H1 (cell line): ENCODE measurements at regions of chr9 and their contacts with region 1.

Region 1: GRCh38 chr9:127916665-127917613 is at the start of gene ST6GALNAC4:
- DNase-seq: peak in 1 of 2 experiments; percentile 97
- H3K4me3 ChIP-seq: peak within 1 kb of the TSS; percentile 55 to 70 (median 60)
- H3K27ac ChIP-seq: no peak within 1 kb of the TSS
- H3K4me1 ChIP-seq: peaks cover 4 to 8% (median 7%) of the 10 kb centered on the region in 4 experiments
- H3K27me3 ChIP-seq: peaks cover 0 to 12% (median 10%) of the 10 kb centered on the region in 4 experiments; a peak in 5 of 7 replicates
- CTCF ChIP-seq: no peak
- EP300 ChIP-seq: no peak
- POLR2A ChIP-seq: no peak
- RAD21 ChIP-seq: no peak
- total RNA-seq, gene ST6GALNAC4: 21.8 and 27.0 TPM in 2 replicates

Region 2: DNA sequence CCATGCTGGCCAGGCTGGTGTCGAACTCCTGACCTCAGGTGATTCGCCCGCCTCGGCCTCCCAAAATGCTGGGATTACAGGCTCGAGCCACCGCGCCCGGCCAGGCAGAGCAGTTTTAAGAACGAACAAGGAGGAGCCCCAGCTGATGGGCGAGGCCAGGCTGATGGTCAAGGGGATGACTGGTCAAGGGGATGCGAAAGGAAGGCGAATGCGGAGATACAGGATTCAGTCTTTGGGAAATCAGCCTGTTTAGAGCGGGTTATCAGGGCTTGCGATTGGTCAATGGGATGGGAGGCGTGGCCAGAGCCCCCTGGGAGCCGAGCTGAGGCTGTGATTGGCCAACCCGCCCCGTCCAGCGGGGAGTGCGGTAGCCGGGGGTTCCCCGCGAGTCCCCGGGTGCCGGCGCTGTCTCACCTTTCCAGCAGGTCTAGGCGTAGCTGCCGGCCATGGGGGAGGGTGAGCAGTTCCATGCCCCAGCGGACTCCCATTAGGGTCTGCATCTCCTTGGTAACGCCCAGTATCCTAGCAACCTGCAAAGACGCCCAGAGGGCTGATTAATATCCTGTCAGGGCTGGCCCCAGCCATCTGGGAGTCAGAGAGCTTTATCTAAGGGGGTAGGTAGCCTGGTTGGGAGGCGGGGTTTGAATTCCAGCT is 174.4 kb before region 1 on chr9:
- CTCF ChIA-PET with region 1: interaction called, 11 read pairs
- POLR2A ChIA-PET with region 1: interaction called, 4 read pairs
- DNase-seq: peak; percentile 91 to 96
- H3K4me3 ChIP-seq: peak overlapping the region; percentile 32 to 67 (median 47)
- H3K27ac ChIP-seq: no peak overlapping the region; the same call in 1 of the 2 replicates
- H3K4me1 ChIP-seq: no peaks in the 10 kb centered on the region; a peak in 2 of 7 replicates
- H3K27me3 ChIP-seq: no peaks in the 10 kb centered on the region
- CTCF ChIP-seq: no peak
- EP300 ChIP-seq: no peak
- POLR2A ChIP-seq: no peak
- RAD21 ChIP-seq: peak; percentile 8 to 10; a peak in 2 of 4 replicates

Region 3: GRCh38 chr9:127785023-127785932 is 131.7 kb before region 1 on chr9:
- CTCF ChIA-PET with region 1: interaction called, 11 read pairs
- POLR2A ChIA-PET with region 1: interaction called, 8 read pairs
- DNase-seq: peak in 1 of 2 experiments; percentile 95
- H3K4me3 ChIP-seq: peak overlapping the region; percentile 43 to 100 (median 57)
- H3K27ac ChIP-seq: peak overlapping the region; percentile 62; the same call in 1 of the 2 replicates
- H3K4me1 ChIP-seq: peaks cover 0 to 6% (median 3%) of the 10 kb centered on the region in 4 experiments; a peak in 4 of 7 replicates
- H3K27me3 ChIP-seq: no peaks in the 10 kb centered on the region
- CTCF ChIP-seq: peak in 2 of 3 experiments; percentile 65 to 91; a peak in 3 of 4 replicates
- EP300 ChIP-seq: 0 out of 3 replicates have a peak, but pooled peaks of 1 of the 2 experiments have one; percentile 40
- POLR2A ChIP-seq: no peak
- RAD21 ChIP-seq: peak; percentile 77 to 84

Region 4: GRCh38 chr9:127838375-127839078 is 78.4 kb before region 1 on chr9:
- CTCF ChIA-PET with region 1: interaction called, 14 read pairs
- POLR2A ChIA-PET with region 1: no interaction called
- DNase-seq: no peak
- H3K4me3 ChIP-seq: no peak overlapping the region
- H3K27ac ChIP-seq: no peak overlapping the region
- H3K4me1 ChIP-seq: peaks cover 0 to 4% (median 0%) of the 10 kb centered on the region in 4 experiments; a peak in 2 of 7 replicates
- H3K27me3 ChIP-seq: no peaks in the 10 kb centered on the region; a peak in 1 of 7 replicates
- CTCF ChIP-seq: no peak
- EP300 ChIP-seq: no peak
- POLR2A ChIP-seq: no peak
- RAD21 ChIP-seq: no peak

Region 5: GRCh38 chr9:127884427-127884911 is 32.5 kb before region 1 on chr9:
- CTCF ChIA-PET with region 1: interaction called, 11 read pairs
- POLR2A ChIA-PET with region 1: interaction called, 5 read pairs
- DNase-seq: no peak
- H3K4me3 ChIP-seq: no peak overlapping the region
- H3K27ac ChIP-seq: no peak overlapping the region
- H3K4me1 ChIP-seq: no peaks in the 10 kb centered on the region; a peak in 3 of 7 replicates
- H3K27me3 ChIP-seq: no peaks in the 10 kb centered on the region
- CTCF ChIP-seq: no peak
- EP300 ChIP-seq: no peak
- POLR2A ChIP-seq: no peak
- RAD21 ChIP-seq: no peak

Region 6: DNA sequence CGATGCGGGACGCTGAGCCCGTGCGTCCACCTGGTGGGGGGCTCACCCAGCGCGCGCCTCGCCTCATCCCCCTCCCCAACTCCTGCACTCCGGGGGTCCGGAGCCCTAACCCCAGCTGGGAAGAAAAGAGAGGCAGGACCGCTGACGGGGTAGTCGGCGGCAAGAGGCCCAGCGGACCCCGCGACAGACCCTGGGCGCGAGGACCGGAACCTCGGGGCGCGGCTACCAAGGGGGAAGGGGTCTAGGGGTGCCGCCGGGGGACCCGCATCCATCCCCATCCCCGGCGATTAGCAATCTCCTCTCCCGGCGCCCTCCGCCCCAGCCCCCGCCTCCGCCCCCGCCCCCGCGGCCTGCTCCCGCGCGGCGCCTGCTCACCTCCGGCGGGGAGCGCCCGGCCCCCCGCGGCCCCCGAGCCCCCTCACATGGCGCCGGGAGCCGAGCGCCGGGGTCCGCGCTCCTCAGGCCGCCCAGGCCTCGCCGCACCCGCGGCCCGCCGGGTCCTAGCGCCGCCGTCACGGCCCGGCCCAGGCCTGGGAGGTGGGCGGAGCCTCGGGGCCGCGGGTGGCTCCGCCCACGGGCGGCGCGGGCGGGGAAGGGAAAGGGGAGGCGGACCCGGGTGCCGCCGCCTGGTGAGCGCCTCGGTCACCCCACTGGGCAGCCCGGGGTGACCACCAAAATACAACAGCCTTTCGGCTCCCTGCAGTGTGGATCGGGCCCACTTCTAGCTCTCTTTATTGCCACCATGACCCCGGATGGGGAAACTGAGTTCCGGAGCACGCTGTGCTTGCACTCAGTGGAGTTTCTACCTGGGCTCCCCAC is 17.6 kb before region 1 on chr9 and contains the start of gene ST6GALNAC6:
- CTCF ChIA-PET with region 1: interaction called, 13 read pairs
- POLR2A ChIA-PET with region 1: interaction called, 16 read pairs
- DNase-seq: peak in 1 of 2 experiments; percentile 82
- H3K4me3 ChIP-seq: peak within 1 kb of the TSS; percentile 78 to 99 (median 88)
- H3K27ac ChIP-seq: no peak within 1 kb of the TSS
- H3K4me1 ChIP-seq: peaks cover 3 to 40% (median 25%) of the 10 kb centered on the region in 4 experiments
- H3K27me3 ChIP-seq: no peaks in the 10 kb centered on the region
- CTCF ChIP-seq: no peak
- EP300 ChIP-seq: no peak
- POLR2A ChIP-seq: peak in 1 of 2 experiments; percentile 44; a peak in 1 of 3 replicates
- RAD21 ChIP-seq: no peak
- total RNA-seq, gene ST6GALNAC6: 37.7 and 43.7 TPM in 2 replicates